H1 (cell line): ENCODE measurements at regions of chr2 and their contacts with region 1.

Region 1: GRCh38 chr2:27754138-27754588 is 17.4 kb upstream of the MRPL33 start:
- DNase-seq: peak; percentile 72 to 92
- H3K4me3 ChIP-seq: peak overlapping the region in 1 of 4 experiments; percentile 64; a peak in 1 of 8 replicates
- H3K27ac ChIP-seq: no peak overlapping the region
- H3K4me1 ChIP-seq: peaks cover 3 to 13% (median 8%) of the 10 kb centered on the region in 4 experiments; a peak in 6 of 7 replicates
- H3K27me3 ChIP-seq: no peaks in the 10 kb centered on the region
- CTCF ChIP-seq: peak; percentile 96 to 99 (median 99)
- EP300 ChIP-seq: no peak
- POLR2A ChIP-seq: no peak
- RAD21 ChIP-seq: peak; percentile 96 to 98

Region 2: GRCh38 chr2:27566628-27567027 is 187.5 kb before region 1 on chr2:
- CTCF ChIA-PET with region 1: no interaction called
- POLR2A ChIA-PET with region 1: no interaction called
- DNase-seq: no peak
- H3K4me3 ChIP-seq: no peak overlapping the region
- H3K27ac ChIP-seq: no peak overlapping the region
- H3K4me1 ChIP-seq: no peaks in the 10 kb centered on the region
- H3K27me3 ChIP-seq: peaks cover 0 to 4% (median under 1%) of the 10 kb centered on the region in 4 experiments; a peak in 2 of 7 replicates
- CTCF ChIP-seq: no peak
- EP300 ChIP-seq: no peak
- POLR2A ChIP-seq: no peak
- RAD21 ChIP-seq: no peak

Region 3: GRCh38 chr2:27715318-27716210 is 38.6 kb before region 1 on chr2:
- CTCF ChIA-PET with region 1: interaction called, 8 read pairs
- POLR2A ChIA-PET with region 1: interaction called, 24 read pairs
- DNase-seq: peak in 1 of 2 experiments; percentile 66
- H3K4me3 ChIP-seq: peak overlapping the region; percentile 79 to 97 (median 82)
- H3K27ac ChIP-seq: peak overlapping the region; percentile 29; the same call in 1 of the 2 replicates
- H3K4me1 ChIP-seq: peaks cover 3 to 15% (median 6%) of the 10 kb centered on the region in 4 experiments
- H3K27me3 ChIP-seq: no peaks in the 10 kb centered on the region
- CTCF ChIP-seq: no peak
- EP300 ChIP-seq: no peak
- POLR2A ChIP-seq: no peak; a peak in 1 of 3 replicates
- RAD21 ChIP-seq: no peak

Region 4: DNA sequence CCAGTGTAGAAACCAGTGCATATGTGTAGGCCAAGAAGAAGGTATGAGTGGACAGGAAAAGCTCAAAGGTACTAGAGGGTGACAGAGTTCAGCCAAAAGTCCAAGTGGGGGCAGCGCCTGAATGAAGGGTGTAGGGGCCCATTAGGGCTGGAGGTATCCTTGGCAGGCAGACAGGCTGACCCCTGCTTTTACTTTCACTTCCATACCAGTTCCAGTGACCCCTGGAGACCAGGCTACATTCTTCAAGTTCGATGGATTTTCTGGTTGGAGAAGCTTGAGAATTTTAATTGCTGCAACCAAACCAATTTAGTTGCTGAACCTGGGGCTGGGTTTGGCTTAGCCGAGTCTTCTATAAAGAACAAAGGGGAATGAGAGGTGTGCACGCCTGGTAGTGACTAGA is 25.0 kb before region 1 on chr2:
- CTCF ChIA-PET with region 1: interaction called, 36 read pairs
- POLR2A ChIA-PET with region 1: interaction called, 18 read pairs
- DNase-seq: no peak
- H3K4me3 ChIP-seq: no peak overlapping the region
- H3K27ac ChIP-seq: no peak overlapping the region
- H3K4me1 ChIP-seq: peaks cover 1 to 11% (median 7%) of the 10 kb centered on the region in 4 experiments; a peak in 6 of 7 replicates
- H3K27me3 ChIP-seq: no peaks in the 10 kb centered on the region; a peak in 1 of 7 replicates
- CTCF ChIP-seq: no peak
- EP300 ChIP-seq: no peak
- POLR2A ChIP-seq: no peak
- RAD21 ChIP-seq: no peak

Region 5: GRCh38 chr2:27771548-27772335 is 17.6 kb after region 1 on chr2 and contains the start of gene MRPL33:
- CTCF ChIA-PET with region 1: interaction called, 6 read pairs
- POLR2A ChIA-PET with region 1: interaction called, 14 read pairs
- DNase-seq: peak; percentile 81 to 97
- H3K4me3 ChIP-seq: peak within 1 kb of the TSS; percentile 60 to 97 (median 88)
- H3K27ac ChIP-seq: peak within 1 kb of the TSS; percentile 80; the same call in 1 of the 2 replicates
- H3K4me1 ChIP-seq: no peaks in the 10 kb centered on the region; a peak in 2 of 7 replicates
- H3K27me3 ChIP-seq: no peaks in the 10 kb centered on the region
- CTCF ChIP-seq: no peak
- EP300 ChIP-seq: no peak
- POLR2A ChIP-seq: peak in 1 of 2 experiments; percentile 91; a peak in 2 of 3 replicates
- RAD21 ChIP-seq: no peak
- total RNA-seq, gene MRPL33: 62.9 and 68.9 TPM in 2 replicates